ENCODE measurements at regions of chr20 and their contacts with region 1.

Region 1: DNA sequence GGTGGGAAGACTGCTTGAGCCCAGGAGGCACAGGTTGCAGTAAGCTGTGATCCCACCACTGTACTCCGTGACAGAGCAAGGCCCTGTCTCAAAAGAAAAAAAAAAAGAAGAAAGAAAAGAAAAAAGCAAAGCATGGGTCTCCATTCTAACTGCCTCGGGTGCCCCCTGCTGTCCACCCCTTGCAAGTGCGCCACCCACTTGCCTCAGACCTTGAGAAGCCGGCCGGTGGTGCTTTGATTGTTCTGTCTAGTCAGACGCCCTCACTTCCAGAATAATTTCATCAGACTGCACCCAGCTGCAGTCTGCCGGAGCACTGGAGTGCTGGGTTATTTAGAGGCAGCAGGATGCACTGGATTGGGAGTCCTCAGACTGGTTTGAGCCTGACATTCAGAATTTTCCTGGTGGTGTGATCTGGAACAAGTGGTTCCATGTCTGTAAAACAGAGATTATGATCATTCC is 17.6 kb upstream of the TM9SF4 start:
- DNase-seq: peak; percentile 78
- H3K4me3 ChIP-seq: no peak overlapping the region
- H3K27ac ChIP-seq: no peak overlapping the region
- H3K4me1 ChIP-seq: peaks cover 5% of the 10 kb centered on the region
- H3K27me3 ChIP-seq: peaks cover 6 to 8% of the 10 kb centered on the region in 2 experiments
- CTCF ChIP-seq: peak; percentile 92
- POLR2A ChIP-seq: no peak

Region 2: GRCh38 chr20:31822421-31823330 is 269.2 kb before region 1 on chr20:
- CTCF ChIA-PET with region 1: interaction called, 27 read pairs
- POLR2A ChIA-PET with region 1: no interaction called
- dilution Hi-C with region 1: no loop called
- intact Hi-C with region 1: loop called (anchors 1 kb)
- DNase-seq: peak; percentile 62
- H3K4me3 ChIP-seq: no peak overlapping the region
- H3K27ac ChIP-seq: peak overlapping the region; percentile 26
- H3K4me1 ChIP-seq: peaks cover 22% of the 10 kb centered on the region
- H3K27me3 ChIP-seq: no peaks in the 10 kb centered on the region
- CTCF ChIP-seq: peak; percentile 96 to 97
- POLR2A ChIP-seq: no peak

Region 3: DNA sequence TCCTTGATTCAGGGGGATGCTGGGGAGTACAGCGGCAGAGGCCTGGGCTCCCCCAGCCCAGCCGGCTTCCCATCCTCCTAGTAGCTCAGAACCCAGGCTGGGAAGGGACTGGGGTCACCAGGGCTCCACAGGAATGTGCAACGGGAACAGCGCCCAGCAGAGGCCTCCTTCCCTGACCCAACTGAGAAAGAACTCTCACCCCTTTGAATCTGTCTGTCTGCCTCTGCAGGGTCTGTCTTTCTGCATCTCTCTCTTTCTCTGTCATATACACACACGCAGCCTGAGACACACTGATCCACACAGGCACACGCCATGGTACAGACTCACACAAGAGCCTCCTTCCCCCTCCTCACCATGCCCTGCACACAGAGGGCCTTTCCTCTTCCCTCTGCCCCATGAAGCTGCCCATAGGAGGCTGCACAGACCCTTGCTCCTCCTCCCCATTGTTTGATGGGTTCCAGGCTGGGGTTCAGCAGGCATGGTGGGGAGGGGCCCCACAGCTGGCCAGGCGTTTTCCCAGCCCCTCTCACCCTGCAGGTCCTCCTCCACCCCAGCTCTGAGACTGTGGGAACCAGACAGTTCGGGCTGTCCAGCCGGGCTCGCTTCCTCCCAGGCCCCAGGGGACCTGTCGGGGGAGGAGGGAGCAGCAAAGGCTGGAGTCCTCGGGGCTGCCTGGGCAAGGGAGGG is 249.3 kb before region 1 on chr20:
- CTCF ChIA-PET with region 1: interaction called, 11 read pairs
- POLR2A ChIA-PET with region 1: no interaction called
- dilution Hi-C with region 1: no loop called
- intact Hi-C with region 1: no loop called
- DNase-seq: peak; percentile 44
- H3K4me3 ChIP-seq: no peak overlapping the region
- H3K27ac ChIP-seq: peak overlapping the region; percentile 64
- H3K4me1 ChIP-seq: peaks cover 34% of the 10 kb centered on the region
- H3K27me3 ChIP-seq: no peaks in the 10 kb centered on the region
- CTCF ChIP-seq: no peak
- POLR2A ChIP-seq: no peak

Region 4: DNA sequence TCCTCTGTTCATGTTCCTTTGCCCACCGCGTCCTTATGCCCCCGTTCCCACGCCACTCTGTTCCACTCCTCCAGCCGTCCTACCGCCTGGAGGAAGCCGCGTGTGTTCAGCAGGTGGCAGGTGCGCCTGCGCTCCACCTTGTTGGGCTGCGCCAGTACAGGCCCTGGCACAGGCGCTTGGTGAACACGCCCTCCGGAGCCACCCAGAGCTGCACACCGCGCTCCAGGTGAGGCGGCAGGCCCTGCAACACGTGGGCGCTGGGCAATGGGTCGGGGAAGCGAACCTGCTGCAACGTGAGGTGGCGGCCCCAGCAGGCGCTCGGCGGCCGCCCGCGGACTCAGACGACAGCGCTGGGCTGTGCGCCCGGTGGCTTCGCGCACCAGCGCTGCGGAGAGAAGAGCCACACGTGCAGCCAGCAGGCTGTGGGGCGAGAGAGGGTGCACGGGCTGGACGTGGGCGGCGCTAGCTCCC is 242.4 kb before region 1 on chr20:
- CTCF ChIA-PET with region 1: interaction called, 62 read pairs
- POLR2A ChIA-PET with region 1: no interaction called
- dilution Hi-C with region 1: no loop called
- intact Hi-C with region 1: loop called (anchors 1 kb)
- DNase-seq: no peak
- H3K4me3 ChIP-seq: no peak overlapping the region
- H3K27ac ChIP-seq: no peak overlapping the region
- H3K4me1 ChIP-seq: no peaks in the 10 kb centered on the region
- H3K27me3 ChIP-seq: peaks cover 18 to 19% of the 10 kb centered on the region in 2 experiments
- CTCF ChIP-seq: no peak
- POLR2A ChIP-seq: no peak

Region 5: DNA sequence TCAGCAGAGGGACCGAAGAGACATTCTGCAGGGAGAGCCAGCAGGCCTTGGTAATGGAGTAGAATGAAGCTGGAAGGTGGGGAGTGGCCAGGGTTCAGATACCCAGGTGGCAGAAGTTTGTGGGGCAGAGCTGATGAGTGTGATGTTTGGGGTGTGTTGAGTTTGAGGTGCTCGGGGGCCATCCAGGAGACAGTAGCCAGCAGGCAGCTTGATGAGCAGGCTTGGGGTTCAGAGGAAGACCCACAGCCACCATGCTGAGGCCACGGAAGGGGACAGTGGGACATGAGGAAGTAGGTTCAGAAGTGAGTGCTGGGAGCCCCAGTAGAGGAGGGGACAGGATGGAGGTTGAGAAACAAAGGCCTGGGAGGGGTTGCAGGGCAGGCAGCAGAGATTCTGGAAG is 235.4 kb before region 1 on chr20:
- CTCF ChIA-PET with region 1: interaction called, 62 read pairs
- POLR2A ChIA-PET with region 1: no interaction called
- dilution Hi-C with region 1: no loop called
- intact Hi-C with region 1: loop called (anchors 1 kb)
- DNase-seq: no peak
- H3K4me3 ChIP-seq: no peak overlapping the region
- H3K27ac ChIP-seq: no peak overlapping the region
- H3K4me1 ChIP-seq: no peaks in the 10 kb centered on the region
- H3K27me3 ChIP-seq: peaks cover 27 to 40% of the 10 kb centered on the region in 2 experiments
- CTCF ChIP-seq: no peak
- POLR2A ChIP-seq: no peak

Region 6: DNA sequence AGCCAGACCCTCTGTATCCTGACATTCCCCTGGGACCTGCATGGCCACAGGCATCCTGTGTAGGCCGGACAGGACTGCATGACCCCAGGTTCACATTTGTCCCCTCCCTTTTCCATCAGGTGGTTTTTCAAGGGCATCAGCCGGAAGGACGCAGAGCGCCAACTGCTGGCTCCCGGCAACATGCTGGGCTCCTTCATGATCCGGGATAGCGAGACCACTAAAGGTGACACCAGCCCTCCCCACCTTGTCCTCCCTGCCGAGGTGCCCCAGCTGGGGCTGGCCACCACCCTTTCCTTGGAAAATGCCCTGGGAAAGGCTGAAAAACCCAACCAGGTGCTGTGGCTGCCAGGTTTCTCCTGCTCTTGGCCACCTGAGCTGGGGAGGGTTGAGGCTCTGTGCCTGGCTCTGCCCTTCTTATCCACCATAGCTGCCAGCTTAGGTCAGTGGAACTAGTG is 12.2 kb before region 1 on chr20:
- CTCF ChIA-PET with region 1: interaction called, 17 read pairs
- POLR2A ChIA-PET with region 1: no interaction called
- dilution Hi-C with region 1: no loop called
- intact Hi-C with region 1: no loop called
- DNase-seq: no peak
- H3K4me3 ChIP-seq: no peak overlapping the region
- H3K27ac ChIP-seq: no peak overlapping the region
- H3K4me1 ChIP-seq: peaks cover 3% of the 10 kb centered on the region
- H3K27me3 ChIP-seq: peaks cover 2 to 3% of the 10 kb centered on the region in 2 experiments
- CTCF ChIP-seq: no peak
- POLR2A ChIP-seq: no peak